B cell (primary cell): ENCODE measurements at regions of chr1 and their contacts with region 1.

Region 1: DNA sequence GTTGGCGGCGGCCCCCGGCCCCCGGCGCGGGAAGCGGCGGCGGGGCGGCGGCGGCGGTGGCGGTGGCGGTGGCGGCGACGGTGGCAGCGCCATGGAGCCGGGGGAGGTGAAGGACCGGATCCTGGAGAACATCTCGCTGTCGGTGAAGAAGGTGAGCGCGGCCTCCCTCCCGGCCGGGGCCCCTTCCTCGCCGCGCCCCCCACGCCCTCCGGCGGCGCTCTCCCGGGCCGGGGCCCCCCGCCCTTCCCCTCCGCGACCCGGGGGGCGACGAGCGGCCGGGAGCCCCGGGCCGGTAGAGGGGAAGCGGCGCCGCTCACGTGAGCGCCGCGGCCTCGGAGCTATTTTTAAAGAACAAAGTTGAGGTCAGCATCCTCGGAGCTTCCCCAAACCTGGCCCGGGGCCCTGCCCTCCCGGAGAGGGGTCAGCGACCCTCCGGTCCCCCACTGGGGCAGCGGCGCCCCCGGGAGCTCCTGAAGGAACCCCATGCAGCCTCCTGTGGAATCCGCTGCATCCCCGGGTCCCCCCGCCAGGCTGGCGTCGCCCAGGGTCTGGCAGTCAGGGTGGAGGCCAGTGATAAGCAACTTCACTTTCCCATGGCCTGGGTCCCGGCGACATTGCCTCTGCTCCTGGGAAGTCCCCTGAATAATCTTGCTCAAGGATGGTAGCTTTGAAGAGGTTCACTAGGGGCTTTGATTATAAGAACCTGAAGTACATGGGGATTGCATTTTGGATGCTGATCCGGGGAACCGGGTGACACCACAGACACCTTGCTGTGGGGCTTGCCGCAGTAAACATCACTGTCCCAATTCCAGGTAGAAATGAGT is 560 bp downstream of the PLEKHM2 start:
- DNase-seq: peak; percentile 75
- ATAC-seq: peak; percentile 8
- H3K4me3 ChIP-seq: peak overlapping the region; percentile 69 to 89 (median 82)
- H3K4me3 Mint-ChIP-seq: peak overlapping the region; percentile 91
- H3K27ac ChIP-seq: peak overlapping the region; percentile 83 to 84
- H3K27ac Mint-ChIP-seq: peak overlapping the region; percentile 92
- H3K4me1 ChIP-seq: peaks cover 37 to 50% of the 10 kb centered on the region in 2 donors
- H3K4me1 Mint-ChIP-seq: peaks cover 61% of the 10 kb centered on the region
- H3K27me3 ChIP-seq: no peaks in the 10 kb centered on the region
- H3K27me3 Mint-ChIP-seq: no peaks in the 10 kb centered on the region
- CTCF ChIP-seq: no peak

Region 2: GRCh38 chr1:15538770-15539169 is 145.9 kb before region 1 on chr1:
- CTCF ChIA-PET with region 1: no interaction called
- POLR2A ChIA-PET with region 1: interaction called, 10 read pairs
- intact Hi-C with region 1: no loop called
- DNase-seq: no peak
- ATAC-seq: no peak
- H3K4me3 ChIP-seq: no peak overlapping the region
- H3K4me3 Mint-ChIP-seq: no peak overlapping the region
- H3K27ac ChIP-seq: no peak overlapping the region
- H3K27ac Mint-ChIP-seq: no peak overlapping the region
- H3K4me1 ChIP-seq: no peaks in the 10 kb centered on the region
- H3K4me1 Mint-ChIP-seq: peaks cover 2% of the 10 kb centered on the region
- H3K27me3 ChIP-seq: no peaks in the 10 kb centered on the region
- H3K27me3 Mint-ChIP-seq: no peaks in the 10 kb centered on the region
- CTCF ChIP-seq: no peak

Region 3: DNA sequence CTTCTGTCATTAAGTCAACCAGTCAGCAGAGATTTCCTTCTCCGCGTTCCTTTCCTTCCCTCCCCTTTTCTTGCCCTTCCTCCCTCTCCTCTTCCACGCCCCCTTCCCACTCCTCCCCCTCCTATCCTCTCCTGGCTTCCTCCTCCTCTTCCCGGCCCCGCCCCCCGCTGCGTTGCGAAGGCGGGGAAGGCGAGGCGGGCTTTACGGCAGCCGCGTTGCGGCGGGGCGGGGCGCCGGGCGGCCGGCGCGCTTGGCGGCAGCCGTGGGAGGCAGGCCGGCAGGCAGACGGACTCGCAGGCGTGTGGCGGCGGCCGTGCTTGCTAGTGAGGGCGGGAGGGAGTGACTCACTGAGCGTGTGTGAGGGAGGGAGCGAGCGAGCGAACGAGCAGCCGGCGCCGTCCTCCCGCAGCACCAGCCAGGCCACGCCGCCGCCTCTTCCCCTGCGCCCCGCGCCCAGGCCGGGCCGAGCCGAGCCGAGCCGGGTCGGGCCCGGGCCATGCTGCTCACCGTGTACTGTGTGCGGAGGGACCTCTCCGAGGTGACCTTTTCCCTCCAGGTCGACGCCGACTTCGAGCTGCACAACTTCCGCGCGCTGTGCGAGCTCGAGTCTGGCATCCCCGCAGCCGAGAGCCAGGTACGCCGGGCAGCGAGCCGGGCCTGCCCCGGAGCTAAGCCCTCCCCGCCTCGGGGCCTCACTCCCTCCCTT is 67.4 kb before region 1 on chr1 and contains the start of gene DDI2:
- CTCF ChIA-PET with region 1: interaction called, 6 read pairs
- POLR2A ChIA-PET with region 1: interaction called, 6 read pairs
- intact Hi-C with region 1: loop called (anchors 2 kb)
- DNase-seq: peak; percentile 94
- ATAC-seq: peak; percentile 88
- H3K4me3 ChIP-seq: peak within 1 kb of the TSS; percentile 82 to 98 (median 90)
- H3K4me3 Mint-ChIP-seq: peak within 1 kb of the TSS; percentile 91
- H3K27ac ChIP-seq: peak within 1 kb of the TSS; percentile 88 to 92
- H3K27ac Mint-ChIP-seq: peak within 1 kb of the TSS; percentile 88
- H3K4me1 ChIP-seq: peaks cover 26 to 32% of the 10 kb centered on the region in 2 donors
- H3K4me1 Mint-ChIP-seq: peaks cover 35% of the 10 kb centered on the region
- H3K27me3 ChIP-seq: no peaks in the 10 kb centered on the region
- H3K27me3 Mint-ChIP-seq: no peaks in the 10 kb centered on the region
- CTCF ChIP-seq: no peak
- total RNA-seq, gene DDI2: 61.0 and 68.3 TPM in 2 replicates

Region 4: DNA sequence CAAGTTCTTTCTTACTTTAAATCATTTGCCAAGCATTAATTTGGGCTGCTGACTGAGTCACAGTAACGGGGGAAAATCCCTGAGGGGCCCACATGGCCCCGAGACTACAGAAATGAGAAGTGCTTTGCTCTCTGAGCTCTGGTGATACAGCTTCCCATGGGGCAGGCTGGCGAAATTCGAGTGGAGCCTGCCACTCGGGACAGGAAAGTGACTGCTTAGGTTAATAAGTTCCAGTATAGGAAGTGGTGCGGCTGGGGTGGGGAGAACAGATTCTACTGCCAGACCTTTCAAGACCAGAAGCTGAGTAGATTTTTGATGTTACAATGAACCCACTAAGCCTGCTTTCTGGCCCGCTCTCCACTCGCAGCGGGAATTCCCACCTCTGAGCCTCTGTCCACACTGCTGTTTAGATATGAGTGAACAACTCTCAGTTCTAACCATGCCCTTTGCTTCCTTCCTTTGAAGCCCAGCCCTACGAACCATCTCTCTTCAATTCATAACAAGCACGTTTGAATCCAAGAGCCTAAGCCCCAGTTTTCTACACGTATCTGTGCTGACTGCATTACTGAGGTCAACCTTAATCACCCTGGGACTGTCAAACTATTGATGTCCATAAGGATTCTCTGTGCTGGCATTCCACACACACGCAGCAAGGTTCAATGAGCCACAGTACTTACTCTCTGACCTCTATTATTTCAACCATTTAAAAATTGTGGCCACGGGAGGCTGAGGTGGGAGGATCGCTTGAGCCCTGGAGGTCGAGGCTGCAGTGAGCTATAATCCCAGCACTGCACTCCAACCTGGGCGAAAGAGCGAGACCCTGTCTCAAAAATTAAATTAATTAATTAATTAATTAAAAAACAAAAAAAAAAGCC is 281.6 kb after region 1 on chr1:
- CTCF ChIA-PET with region 1: no interaction called
- POLR2A ChIA-PET with region 1: no interaction called
- intact Hi-C with region 1: loop called (anchors 5 kb)
- DNase-seq: peak; percentile 88
- ATAC-seq: peak; percentile 79
- H3K4me3 ChIP-seq: peak overlapping the region in 4 of 5 experiments; percentile 27 to 40 (median 30)
- H3K4me3 Mint-ChIP-seq: peak overlapping the region; percentile 74
- H3K27ac ChIP-seq: peak overlapping the region; percentile 86 to 88
- H3K27ac Mint-ChIP-seq: peak overlapping the region; percentile 97
- H3K4me1 ChIP-seq: peaks cover 56 to 66% of the 10 kb centered on the region in 2 donors
- H3K4me1 Mint-ChIP-seq: peaks cover 65% of the 10 kb centered on the region
- H3K27me3 ChIP-seq: no peaks in the 10 kb centered on the region
- H3K27me3 Mint-ChIP-seq: no peaks in the 10 kb centered on the region
- CTCF ChIP-seq: no peak